ENCODE measurements at regions of chr10 and their contacts with region 1.

Region 1: GRCh38 chr10:69800109-69800508 is 1.6 kb upstream of the COL13A1 start:
- DNase-seq: peak; percentile 57
- H3K4me3 ChIP-seq: no peak overlapping the region
- H3K27ac ChIP-seq: no peak overlapping the region
- H3K27me3 ChIP-seq: peaks cover 14% of the 10 kb centered on the region
- CTCF ChIP-seq: peak; percentile 94

Region 2: DNA sequence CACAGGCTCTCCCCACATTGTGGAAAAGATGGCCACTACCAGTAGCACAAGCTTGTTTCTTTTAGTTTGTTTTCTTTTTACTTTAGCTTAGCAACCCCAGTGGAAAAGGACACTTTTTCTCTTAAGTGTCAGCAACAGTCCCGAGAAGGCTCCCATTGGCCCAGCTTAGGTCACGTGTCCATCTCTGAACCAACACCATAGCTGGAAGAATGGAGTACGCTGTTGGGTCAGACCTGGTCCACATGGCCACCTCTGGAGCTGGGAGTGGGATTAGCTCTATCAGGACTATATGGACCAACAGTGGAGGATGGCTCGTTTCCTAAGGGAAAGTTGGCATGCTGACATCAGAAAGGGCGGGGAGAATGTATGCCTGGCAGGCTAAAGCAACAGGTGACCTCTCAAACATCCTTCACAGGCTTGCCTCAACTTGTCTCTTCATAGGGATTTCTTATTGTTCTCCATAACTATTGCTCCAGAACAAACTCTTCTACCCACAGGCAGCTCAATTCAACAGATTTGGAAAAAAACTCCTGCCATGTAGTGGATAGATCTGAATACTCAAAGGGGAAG is 199.3 kb before region 1 on chr10:
- CTCF ChIA-PET with region 1: no interaction called
- POLR2A ChIA-PET with region 1: no interaction called
- DNase-seq: no peak
- H3K4me3 ChIP-seq: no peak overlapping the region
- H3K27ac ChIP-seq: no peak overlapping the region
- H3K27me3 ChIP-seq: peaks cover 17% of the 10 kb centered on the region
- CTCF ChIP-seq: no peak

Region 3: GRCh38 chr10:69644658-69645295 is 155.3 kb before region 1 on chr10:
- CTCF ChIA-PET with region 1: interaction called, 14 read pairs
- POLR2A ChIA-PET with region 1: no interaction called
- DNase-seq: peak; percentile 20
- H3K4me3 ChIP-seq: no peak overlapping the region
- H3K27ac ChIP-seq: no peak overlapping the region
- H3K27me3 ChIP-seq: peaks cover 51% of the 10 kb centered on the region
- CTCF ChIP-seq: peak; percentile 87

Region 4: GRCh38 chr10:69716711-69717560 is 83.2 kb before region 1 on chr10:
- CTCF ChIA-PET with region 1: interaction called, 23 read pairs
- POLR2A ChIA-PET with region 1: no interaction called
- DNase-seq: no peak
- H3K4me3 ChIP-seq: no peak overlapping the region
- H3K27ac ChIP-seq: no peak overlapping the region
- H3K27me3 ChIP-seq: peaks cover 5% of the 10 kb centered on the region
- CTCF ChIP-seq: peak; percentile 77

Region 5: GRCh38 chr10:69742928-69743602 is 57.0 kb before region 1 on chr10:
- CTCF ChIA-PET with region 1: interaction called, 14 read pairs
- POLR2A ChIA-PET with region 1: no interaction called
- DNase-seq: no peak
- H3K4me3 ChIP-seq: no peak overlapping the region
- H3K27ac ChIP-seq: no peak overlapping the region
- H3K27me3 ChIP-seq: no peaks in the 10 kb centered on the region
- CTCF ChIP-seq: peak; percentile 64

Region 6: GRCh38 chr10:69786791-69787190 is 13.3 kb before region 1 on chr10:
- CTCF ChIA-PET with region 1: interaction called, 79 read pairs
- POLR2A ChIA-PET with region 1: no interaction called
- DNase-seq: no peak
- H3K4me3 ChIP-seq: no peak overlapping the region
- H3K27ac ChIP-seq: no peak overlapping the region
- H3K27me3 ChIP-seq: peaks cover 32% of the 10 kb centered on the region
- CTCF ChIP-seq: peak; percentile 54

Region 7: DNA sequence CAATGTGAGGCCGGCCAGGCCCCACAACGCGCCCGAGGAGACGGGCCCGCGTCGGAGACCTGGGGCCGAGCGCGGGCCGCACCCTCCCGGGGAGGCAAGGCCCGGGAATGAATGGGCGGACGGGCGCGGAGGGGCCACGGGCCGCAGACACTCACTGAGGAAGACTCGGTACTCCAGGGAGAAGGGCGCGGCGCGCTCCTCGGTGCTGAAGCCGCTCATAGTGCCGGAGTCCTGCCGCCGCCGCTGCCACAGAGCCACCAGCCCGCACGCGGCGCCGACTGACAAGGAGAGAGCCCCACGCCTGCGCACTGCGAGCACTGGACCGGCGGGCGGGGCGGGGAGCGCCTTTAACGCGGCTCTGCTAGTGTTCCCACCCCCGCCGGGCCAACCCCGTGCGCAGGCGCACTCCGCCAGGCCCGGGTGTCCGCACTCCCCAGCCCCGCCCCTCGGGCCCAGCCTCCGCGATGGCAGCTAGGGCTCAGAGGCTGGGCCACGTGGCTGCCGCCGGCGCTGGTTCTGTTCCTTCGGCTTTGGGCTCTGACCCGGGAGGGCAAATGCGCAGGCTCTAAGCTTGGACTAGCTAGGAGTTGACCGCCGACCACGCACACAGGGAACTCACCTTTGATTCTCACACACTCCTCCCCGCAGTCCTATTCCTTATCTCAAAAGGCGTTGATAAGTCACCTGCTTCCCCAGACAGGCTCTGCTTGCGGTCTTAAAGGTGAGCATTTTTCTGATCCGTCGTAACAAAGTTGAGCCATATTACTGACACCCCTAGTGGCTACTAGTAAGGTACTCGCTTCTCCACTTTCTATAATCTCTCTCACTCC is 433.2 kb after region 1 on chr10 and contains the start of gene PPA1:
- CTCF ChIA-PET with region 1: no interaction called
- POLR2A ChIA-PET with region 1: no interaction called
- DNase-seq: peak; percentile 78
- H3K4me3 ChIP-seq: peak within 1 kb of the TSS; percentile 81
- H3K27ac ChIP-seq: peak within 1 kb of the TSS; percentile 47
- H3K27me3 ChIP-seq: no peaks in the 10 kb centered on the region
- CTCF ChIP-seq: peak; percentile 20; the same call in 1 of the 2 replicates
- polyA plus RNA-seq, gene PPA1: 148 and 227 TPM in 2 replicates